ENCODE measurements at regions of chr18 and their contacts with region 1.

Region 1: GRCh38 chr18:35060122-35060815 is 19.1 kb downstream of the MAPRE2 start:
- DNase-seq: no peak
- ATAC-seq: no peak
- H3K4me3 Mint-ChIP-seq: no peak overlapping the region
- H3K27ac Mint-ChIP-seq: no peak overlapping the region
- H3K4me1 Mint-ChIP-seq: peaks cover 46% of the 10 kb centered on the region
- H3K27me3 Mint-ChIP-seq: no peaks in the 10 kb centered on the region
- CTCF ChIP-seq: no peak

Region 2: GRCh38 chr18:35050028-35050546 is 10.2 kb before region 1 on chr18:
- CTCF ChIA-PET with region 1: interaction called, 3 read pairs
- POLR2A ChIA-PET with region 1: interaction called, 6 read pairs
- intact Hi-C with region 1: loop called (anchors 1 kb)
- DNase-seq: no peak
- ATAC-seq: peak; percentile 41
- H3K4me3 Mint-ChIP-seq: peak overlapping the region; percentile 71
- H3K27ac Mint-ChIP-seq: peak overlapping the region; percentile 95
- H3K4me1 Mint-ChIP-seq: peaks cover 79% of the 10 kb centered on the region
- H3K27me3 Mint-ChIP-seq: no peaks in the 10 kb centered on the region
- CTCF ChIP-seq: no peak

Region 3: DNA sequence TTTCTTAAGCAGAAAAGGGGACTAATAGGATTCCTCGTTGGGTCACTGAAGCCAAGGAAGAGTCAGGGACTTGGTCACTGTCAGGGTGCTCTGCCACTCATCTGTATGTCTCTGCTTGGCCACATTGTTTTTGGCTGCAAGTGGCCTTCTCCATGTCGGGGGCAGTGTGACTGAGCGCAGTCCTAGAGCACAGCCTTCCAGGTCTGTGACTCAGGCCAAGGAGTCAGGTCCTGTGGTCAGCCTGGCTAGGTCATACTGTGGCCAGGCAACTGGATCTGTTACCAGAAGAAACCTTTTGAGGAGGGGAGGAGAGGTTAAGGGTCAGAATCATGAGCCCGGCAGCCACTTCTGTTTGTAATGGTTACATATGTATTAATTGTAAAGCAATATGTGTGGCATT is 582.5 kb after region 1 on chr18:
- CTCF ChIA-PET with region 1: no interaction called
- POLR2A ChIA-PET with region 1: no interaction called
- intact Hi-C with region 1: no loop called
- DNase-seq: no peak
- ATAC-seq: no peak
- H3K4me3 Mint-ChIP-seq: no peak overlapping the region
- H3K27ac Mint-ChIP-seq: no peak overlapping the region
- H3K4me1 Mint-ChIP-seq: peaks cover 18% of the 10 kb centered on the region
- H3K27me3 Mint-ChIP-seq: no peaks in the 10 kb centered on the region
- CTCF ChIP-seq: no peak